Psoas muscle (tissue), 8 donors: ENCODE measurements at regions of chr3 and their contacts with region 1.

Region 1: DNA sequence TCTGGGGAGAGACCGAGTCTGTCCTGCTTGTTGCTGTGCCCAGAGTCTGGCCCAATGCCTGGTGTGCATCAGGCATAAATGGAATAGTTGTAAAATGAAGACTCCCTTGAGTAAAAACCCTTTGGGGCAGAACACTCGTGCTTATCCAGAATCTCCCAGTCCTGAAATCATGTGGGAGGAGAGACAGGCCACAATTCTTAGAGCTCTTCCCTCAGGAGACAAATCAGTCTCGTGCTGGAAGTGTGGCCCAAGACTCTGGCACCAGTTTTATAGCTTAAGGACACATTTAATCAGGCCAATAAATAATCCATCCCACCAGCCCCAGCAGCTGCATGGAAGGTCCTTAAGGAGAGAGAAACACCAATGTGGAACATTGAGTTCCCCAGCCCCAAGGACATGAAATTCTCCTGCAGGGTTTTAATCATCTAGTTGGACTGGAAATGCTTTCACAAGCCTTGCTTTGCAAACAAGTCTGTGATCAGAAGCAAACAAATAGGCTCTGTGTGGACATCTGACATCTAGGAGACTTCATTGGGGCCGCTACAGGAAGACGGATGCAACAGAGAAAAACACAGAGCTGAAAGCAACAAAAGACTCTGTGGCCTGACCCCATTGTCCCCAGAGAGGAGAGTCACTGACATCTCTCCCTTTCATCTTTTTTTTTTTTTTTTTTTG is 70.4 kb downstream of the LSM3 start:
- DNase-seq: peak in 1 of 2 donors; percentile 71
- ATAC-seq: peak in 3 of 4 donors; percentile 31 to 73 (median 53)
- H3K4me3 ChIP-seq: no peak overlapping the region
- H3K27ac ChIP-seq: no peak overlapping the region
- H3K4me1 ChIP-seq: no peaks in the 10 kb centered on the region
- H3K27me3 ChIP-seq: peaks cover 0 to 2% (median 0%) of the 10 kb centered on the region in 3 donors
- CTCF ChIP-seq: no peak

Region 2: GRCh38 chr3:14210843-14211594 is 38.0 kb before region 1 on chr3:
- intact Hi-C with region 1: loop called in 1 of 2 experiments (anchors 5 kb)
- DNase-seq: no peak
- ATAC-seq: no peak
- H3K4me3 ChIP-seq: no peak overlapping the region
- H3K27ac ChIP-seq: no peak overlapping the region
- H3K4me1 ChIP-seq: peaks cover 6% of the 10 kb centered on the region
- H3K27me3 ChIP-seq: no peaks in the 10 kb centered on the region
- CTCF ChIP-seq: no peak

Region 3: DNA sequence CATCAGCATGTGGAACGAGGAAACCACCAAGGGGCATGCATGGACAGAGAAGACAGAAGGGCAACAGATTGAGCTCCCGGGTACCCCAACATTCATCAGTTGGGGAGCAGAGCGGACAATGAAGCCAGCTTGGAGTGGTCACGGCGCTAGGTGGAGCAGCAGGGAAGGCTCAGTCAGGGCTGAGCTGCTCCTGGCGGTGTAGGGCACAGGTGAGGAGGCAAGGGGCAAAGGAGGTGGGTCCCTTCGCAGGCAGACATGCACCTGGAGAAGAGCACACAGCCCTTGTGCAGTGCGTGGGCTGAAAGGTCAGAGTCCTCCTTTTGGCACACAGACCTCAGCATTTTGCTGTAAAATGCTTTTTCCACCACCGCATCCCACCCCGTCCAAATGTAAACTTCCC is 63.4 kb after region 1 on chr3:
- intact Hi-C with region 1: no loop called
- DNase-seq: no peak
- ATAC-seq: no peak
- H3K4me3 ChIP-seq: no peak overlapping the region
- H3K27ac ChIP-seq: no peak overlapping the region
- H3K4me1 ChIP-seq: no peaks in the 10 kb centered on the region
- H3K27me3 ChIP-seq: no peaks in the 10 kb centered on the region
- CTCF ChIP-seq: no peak